Activated T-helper 2 cell treated with anti-CD3 and anti-CD28 coated beads, Interferon-gamma antibody, Interleukin-2, Interleukin-4, amounts not matched to agents 10 μg/mL and 5 μg/mL and 100 μg/mL, durations not matched to agents 14 hours and 24 hours and 36 hours (primary cell): ENCODE measurements at regions of chr1 and their contacts with region 1.

Region 1: GRCh38 chr1:198929961-198930599 is 291.2 kb downstream of the PTPRC start:
- DNase-seq: no peak
- H3K4me3 Mint-ChIP-seq: peak overlapping the region; percentile 82
- H3K27ac Mint-ChIP-seq: peak overlapping the region; percentile 86
- H3K4me1 Mint-ChIP-seq: peaks cover 48% of the 10 kb centered on the region
- H3K27me3 Mint-ChIP-seq: no peaks in the 10 kb centered on the region

Region 2: DNA sequence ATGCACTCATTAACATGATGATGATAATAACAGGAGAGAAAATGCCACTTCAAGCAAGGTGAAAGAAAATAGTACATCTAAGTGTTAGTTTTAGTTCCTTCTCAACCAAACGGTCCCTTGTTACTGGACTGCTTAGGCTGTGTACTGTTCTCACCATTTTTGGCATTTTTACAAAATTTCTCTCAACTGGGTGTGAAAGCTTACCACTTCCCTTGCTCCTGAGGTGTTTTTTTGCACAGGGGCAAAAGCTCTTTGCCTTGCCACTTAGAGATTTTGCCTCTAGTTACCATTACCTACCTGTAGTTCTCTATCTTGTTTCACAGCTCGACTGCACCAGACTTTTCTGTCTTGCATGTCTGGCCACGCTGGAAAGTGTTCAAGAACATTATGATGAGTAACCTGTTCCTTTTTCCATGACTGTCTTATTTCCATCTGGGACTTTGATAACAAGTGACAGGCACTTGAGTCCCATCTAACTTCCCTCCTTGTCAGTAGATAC is 762.6 kb before region 1 on chr1:
- intact Hi-C with region 1: loop called (anchors 2 kb)
- DNase-seq: no peak
- H3K4me3 Mint-ChIP-seq: peak overlapping the region; percentile 48
- H3K27ac Mint-ChIP-seq: peak overlapping the region; percentile 89
- H3K4me1 Mint-ChIP-seq: peaks cover 70% of the 10 kb centered on the region
- H3K27me3 Mint-ChIP-seq: no peaks in the 10 kb centered on the region

Region 3: DNA sequence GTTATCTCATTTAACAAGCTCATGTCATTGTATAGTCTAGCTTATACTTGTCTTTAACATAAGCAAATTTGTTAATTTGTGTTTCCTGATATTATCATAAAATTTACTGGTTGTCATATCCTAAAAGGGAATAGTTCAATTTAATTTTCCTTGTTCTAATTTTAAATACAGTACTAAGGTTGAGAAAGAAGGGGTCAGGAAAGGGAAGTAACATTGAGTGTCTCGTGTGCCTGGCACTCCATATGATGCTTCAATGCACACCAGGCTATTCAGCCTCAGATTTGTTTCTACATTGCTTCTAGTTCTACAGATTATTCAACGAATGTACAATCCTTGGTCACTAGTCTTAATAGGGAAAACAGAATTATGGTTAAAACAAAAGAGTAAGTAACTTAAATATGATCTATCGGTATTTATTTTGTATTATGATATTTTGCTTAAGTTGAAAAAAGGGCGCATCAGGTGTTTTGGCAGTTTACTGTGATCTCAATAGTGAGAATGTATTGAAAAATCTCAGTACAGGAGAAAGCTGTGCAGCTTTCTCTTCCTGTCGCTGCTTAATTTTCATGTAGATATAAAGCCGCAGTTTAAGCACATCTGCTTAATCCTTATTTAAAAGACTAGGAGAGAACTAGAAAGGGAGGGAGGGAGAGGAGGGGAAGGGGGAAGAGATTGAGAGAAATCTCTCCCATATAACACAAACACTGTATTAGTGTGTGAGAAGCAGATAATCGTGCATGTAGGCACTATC is 278.3 kb before region 1 on chr1:
- intact Hi-C with region 1: loop called (anchors 5 kb)
- DNase-seq: no peak
- H3K4me3 Mint-ChIP-seq: peak overlapping the region; percentile 73
- H3K27ac Mint-ChIP-seq: peak overlapping the region; percentile 67
- H3K4me1 Mint-ChIP-seq: peaks cover 70% of the 10 kb centered on the region
- H3K27me3 Mint-ChIP-seq: no peaks in the 10 kb centered on the region

Region 4: GRCh38 chr1:198669023-198669698 is 260.9 kb before region 1 on chr1:
- intact Hi-C with region 1: loop called (anchors 5 kb)
- DNase-seq: peak; percentile 56
- H3K4me3 Mint-ChIP-seq: peak overlapping the region; percentile 49
- H3K27ac Mint-ChIP-seq: peak overlapping the region; percentile 83
- H3K4me1 Mint-ChIP-seq: peaks cover 82% of the 10 kb centered on the region
- H3K27me3 Mint-ChIP-seq: no peaks in the 10 kb centered on the region

Region 5: GRCh38 chr1:199123615-199124014 is 193.5 kb after region 1 on chr1:
- intact Hi-C with region 1: no loop called
- DNase-seq: no peak
- H3K4me3 Mint-ChIP-seq: no peak overlapping the region
- H3K27ac Mint-ChIP-seq: no peak overlapping the region
- H3K4me1 Mint-ChIP-seq: peaks cover 11% of the 10 kb centered on the region
- H3K27me3 Mint-ChIP-seq: peaks cover 10% of the 10 kb centered on the region